ENCODE measurements at regions of chr16 and their contacts with region 1.

Region 1: GRCh38 chr16:71894921-71895678 is at the start of gene IST1:
- DNase-seq: peak; percentile 88 to 98 (median 98)
- ATAC-seq: peak; percentile 97
- H3K4me3 ChIP-seq: peak within 1 kb of the TSS; percentile 99
- H3K4me3 Mint-ChIP-seq: peak within 1 kb of the TSS; percentile 95 to 99 (median 96)
- H3K27ac ChIP-seq: peak within 1 kb of the TSS; percentile 98
- H3K27ac Mint-ChIP-seq: peak within 1 kb of the TSS; percentile 92 to 98 (median 97)
- H3K4me1 ChIP-seq: peaks cover 22 to 25% of the 10 kb centered on the region in 2 donors
- H3K4me1 Mint-ChIP-seq: peaks cover 23 to 43% (median 30%) of the 10 kb centered on the region in 7 donors
- H3K27me3 ChIP-seq: no peaks in the 10 kb centered on the region
- H3K27me3 Mint-ChIP-seq: no peaks in the 10 kb centered on the region
- total RNA-seq, gene IST1: 176 to 303 (median 286) TPM

Region 2: GRCh38 chr16:70454222-70455034 is 1440.7 kb before region 1 on chr16 and contains the start of gene FCSK:
- CTCF ChIA-PET with region 1: no interaction called
- POLR2A ChIA-PET with region 1: no interaction called
- intact Hi-C with region 1: no loop called
- DNase-seq: peak; percentile 63 to 88 (median 84)
- ATAC-seq: peak; percentile 94
- H3K4me3 ChIP-seq: peak within 1 kb of the TSS; percentile 82
- H3K4me3 Mint-ChIP-seq: peak within 1 kb of the TSS; percentile 90 to 95 (median 93)
- H3K27ac ChIP-seq: peak within 1 kb of the TSS; percentile 99
- H3K27ac Mint-ChIP-seq: peak within 1 kb of the TSS; percentile 81 to 95 (median 89)
- H3K4me1 ChIP-seq: peaks cover 8 to 12% of the 10 kb centered on the region in 2 donors
- H3K4me1 Mint-ChIP-seq: peaks cover 6 to 45% (median 37%) of the 10 kb centered on the region in 7 donors
- H3K27me3 ChIP-seq: no peaks in the 10 kb centered on the region
- H3K27me3 Mint-ChIP-seq: peaks cover 0 to 3% (median 0%) of the 10 kb centered on the region in 5 donors
- total RNA-seq, gene FCSK: 23.7 to 45.2 (median 36.7) TPM

Region 3: DNA sequence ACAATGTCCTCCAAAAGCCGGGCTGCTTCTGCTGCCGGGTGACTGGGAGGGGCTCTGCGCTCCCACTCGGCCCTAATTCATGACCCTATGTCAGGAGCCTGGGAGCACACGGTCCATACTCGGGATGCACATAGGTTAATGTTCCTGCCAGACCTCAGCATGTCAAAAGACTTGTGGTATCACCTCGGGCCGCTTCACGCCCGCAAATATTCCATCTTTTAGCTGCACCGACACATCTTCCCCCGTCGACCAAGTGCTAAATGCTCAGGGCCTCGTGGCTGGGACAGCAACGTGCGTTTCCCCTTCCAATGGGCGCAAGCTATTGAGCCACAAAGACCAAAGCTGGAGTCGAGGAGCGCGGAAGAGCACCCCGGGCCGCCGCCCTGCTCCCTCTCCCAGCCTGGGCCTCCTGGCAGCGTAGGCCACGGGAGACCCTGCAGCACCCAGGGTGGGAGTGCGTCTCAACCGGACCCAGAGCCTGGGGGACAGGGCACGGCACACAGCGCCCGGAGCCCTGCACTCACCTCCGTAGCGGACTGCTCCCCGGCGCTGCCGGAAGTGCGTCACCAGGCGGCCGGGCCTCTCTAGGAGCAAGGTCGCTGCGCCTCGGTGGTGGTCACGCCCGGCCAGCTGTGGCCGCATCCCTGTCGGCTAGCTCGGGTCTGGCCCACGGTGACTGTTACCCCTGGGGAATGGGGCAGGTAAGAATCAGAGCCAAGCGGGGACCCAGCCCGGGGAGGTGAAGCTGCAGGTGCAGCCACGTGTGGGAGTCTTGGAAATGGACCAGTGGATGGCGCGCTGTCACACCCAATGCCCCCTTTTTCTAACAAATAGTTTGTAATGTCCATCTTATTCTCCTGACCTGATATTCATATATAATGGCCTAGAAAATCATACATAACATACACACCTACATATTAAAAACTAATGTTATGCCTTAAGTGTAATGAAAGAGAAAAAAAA is 433.1 kb before region 1 on chr16 and contains the start of gene ZNF23:
- CTCF ChIA-PET with region 1: no interaction called
- POLR2A ChIA-PET with region 1: no interaction called
- intact Hi-C with region 1: loop called in 1 of 2 experiments (anchors 10 kb)
- DNase-seq: peak; percentile 53 to 84 (median 72)
- ATAC-seq: peak; percentile 99
- H3K4me3 ChIP-seq: peak within 1 kb of the TSS; percentile 92
- H3K4me3 Mint-ChIP-seq: peak within 1 kb of the TSS; percentile 88 to 97 (median 94)
- H3K27ac ChIP-seq: peak within 1 kb of the TSS; percentile 87
- H3K27ac Mint-ChIP-seq: peak within 1 kb of the TSS; percentile 85 to 98 (median 92)
- H3K4me1 ChIP-seq: peaks cover 4 to 6% of the 10 kb centered on the region in 2 donors
- H3K4me1 Mint-ChIP-seq: peaks cover 13 to 39% (median 27%) of the 10 kb centered on the region in 7 donors
- H3K27me3 ChIP-seq: no peaks in the 10 kb centered on the region
- H3K27me3 Mint-ChIP-seq: no peaks in the 10 kb centered on the region
- total RNA-seq, gene ZNF23: 6.5 to 16.0 (median 8.8) TPM

Region 4: DNA sequence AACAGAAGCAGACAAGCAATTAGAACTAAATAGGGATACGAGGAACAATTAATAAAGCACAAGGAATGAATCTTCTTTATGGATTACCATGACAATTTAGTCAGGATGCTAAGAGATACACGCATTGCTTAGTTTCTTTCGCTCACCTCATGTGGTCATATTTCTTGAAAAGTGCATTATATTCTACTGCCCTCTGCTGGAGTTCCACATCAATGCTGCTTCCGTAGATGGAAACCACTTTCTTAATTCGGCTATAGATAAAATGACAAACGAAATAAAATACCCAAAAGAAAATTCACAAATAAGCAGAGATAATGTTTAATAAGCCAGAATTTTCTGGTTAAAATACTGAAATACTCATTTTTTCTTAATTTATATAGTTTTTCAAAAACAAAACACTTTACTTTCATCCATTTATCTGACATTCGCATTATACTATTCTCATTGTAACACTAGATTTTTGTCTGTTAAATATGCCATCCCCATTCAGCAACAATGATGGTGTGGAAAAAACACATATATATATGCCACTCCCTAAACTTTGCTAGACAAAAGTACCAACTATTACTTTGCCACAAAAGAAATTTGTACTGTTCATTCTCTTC is 148.6 kb before region 1 on chr16:
- CTCF ChIA-PET with region 1: no interaction called
- POLR2A ChIA-PET with region 1: no interaction called
- intact Hi-C with region 1: loop called in 1 of 2 experiments (anchors 1 kb)
- DNase-seq: peak in 7 of 9 donors; percentile 14 to 59 (median 45)
- ATAC-seq: peak; percentile 82
- H3K4me3 ChIP-seq: no peak overlapping the region
- H3K4me3 Mint-ChIP-seq: no peak overlapping the region
- H3K27ac ChIP-seq: no peak overlapping the region
- H3K27ac Mint-ChIP-seq: peak overlapping the region in 1 of 9 donors; percentile 14
- H3K4me1 ChIP-seq: no peaks in the 10 kb centered on the region
- H3K4me1 Mint-ChIP-seq: peaks cover 0 to 5% (median 0%) of the 10 kb centered on the region in 7 donors
- H3K27me3 ChIP-seq: no peaks in the 10 kb centered on the region
- H3K27me3 Mint-ChIP-seq: no peaks in the 10 kb centered on the region

Region 5: DNA sequence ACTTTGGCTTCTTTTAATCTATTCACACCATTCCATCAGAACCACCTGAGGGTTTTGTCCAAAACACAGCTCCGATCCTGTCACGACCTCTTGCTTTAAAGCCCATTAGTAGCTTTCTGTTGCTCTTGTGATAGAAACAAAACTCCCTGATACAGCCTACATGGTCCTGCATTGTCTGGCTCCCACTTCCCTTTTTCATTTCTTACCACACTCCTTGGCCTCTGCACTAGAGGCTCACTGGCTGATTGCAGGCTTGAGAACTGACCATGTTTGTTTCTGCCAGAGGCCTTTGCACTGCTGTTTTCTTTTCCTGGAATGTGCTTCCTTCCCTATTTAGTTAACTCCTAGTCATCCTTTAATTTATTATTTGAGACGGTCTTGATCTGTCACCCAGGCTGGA is 23.9 kb after region 1 on chr16:
- CTCF ChIA-PET with region 1: no interaction called
- POLR2A ChIA-PET with region 1: interaction called, 4 read pairs
- intact Hi-C with region 1: loop called in 1 of 2 experiments (anchors 2 kb)
- DNase-seq: no peak
- ATAC-seq: peak; percentile 52
- H3K4me3 ChIP-seq: no peak overlapping the region
- H3K4me3 Mint-ChIP-seq: no peak overlapping the region
- H3K27ac ChIP-seq: no peak overlapping the region
- H3K27ac Mint-ChIP-seq: peak overlapping the region in 2 of 9 donors; percentile 63 to 70
- H3K4me1 ChIP-seq: peaks cover 6% of the 10 kb centered on the region in 2 donors
- H3K4me1 Mint-ChIP-seq: peaks cover 21 to 52% (median 39%) of the 10 kb centered on the region in 7 donors
- H3K27me3 ChIP-seq: no peaks in the 10 kb centered on the region
- H3K27me3 Mint-ChIP-seq: no peaks in the 10 kb centered on the region

Region 6: DNA sequence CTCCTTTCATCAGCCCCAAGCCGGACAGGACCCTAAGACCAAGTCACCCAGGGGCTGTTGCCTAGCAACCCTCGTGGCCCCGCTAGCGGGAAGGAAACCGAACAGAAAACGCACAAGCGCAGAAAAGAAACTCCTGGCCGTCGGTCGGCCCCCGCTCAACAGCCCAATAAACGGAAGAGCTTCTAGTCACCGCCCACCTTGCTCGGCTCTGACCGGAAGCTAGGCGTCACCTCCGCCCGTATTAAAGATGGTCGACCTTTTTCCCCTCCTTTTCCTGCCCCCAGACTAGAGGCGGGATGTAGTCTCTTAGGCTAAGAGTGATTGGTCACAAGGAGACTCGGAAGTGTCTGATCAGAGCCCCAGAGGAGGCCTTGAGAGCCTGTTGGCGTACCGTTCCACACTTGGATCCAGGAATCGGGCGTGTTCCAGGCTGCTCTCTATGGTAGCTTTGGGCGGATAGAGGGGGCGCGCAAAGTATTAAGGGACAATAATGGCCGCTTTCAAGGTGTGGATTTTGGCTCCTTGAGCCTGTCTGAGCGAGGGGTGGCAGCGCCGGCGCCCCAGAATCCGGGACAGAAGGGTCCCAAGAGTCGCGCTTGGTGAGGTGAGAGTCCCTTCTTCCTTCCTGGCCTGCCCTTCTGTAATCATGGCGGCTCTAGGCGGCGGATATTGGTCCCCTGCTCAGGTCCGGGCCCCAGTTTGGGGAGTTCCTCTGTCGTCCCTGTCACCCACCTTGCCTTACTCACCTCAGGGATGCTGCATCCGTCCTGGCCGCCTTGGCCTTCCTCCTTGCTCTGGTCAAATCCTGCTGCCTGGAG is 198.6 kb after region 1 on chr16 and contains the starts of genes DHX38 and TXNL4B:
- CTCF ChIA-PET with region 1: no interaction called
- POLR2A ChIA-PET with region 1: no interaction called
- intact Hi-C with region 1: loop called (anchors 1 to 2 kb)
- DNase-seq: peak; percentile 70 to 95 (median 92)
- ATAC-seq: peak; percentile 98
- H3K4me3 ChIP-seq: peak within 1 kb of the TSS; percentile 86
- H3K4me3 Mint-ChIP-seq: peak within 1 kb of the TSS; percentile 94 to 100 (median 98)
- H3K27ac ChIP-seq: peak within 1 kb of the TSS; percentile 93
- H3K27ac Mint-ChIP-seq: peak within 1 kb of the TSS; percentile 92 to 100 (median 99)
- H3K4me1 ChIP-seq: peaks cover 21 to 24% of the 10 kb centered on the region in 2 donors
- H3K4me1 Mint-ChIP-seq: peaks cover 33 to 70% (median 63%) of the 10 kb centered on the region in 7 donors
- H3K27me3 ChIP-seq: no peaks in the 10 kb centered on the region
- H3K27me3 Mint-ChIP-seq: no peaks in the 10 kb centered on the region
- total RNA-seq, gene DHX38: 90.1 to 113 (median 104) TPM
- total RNA-seq, gene TXNL4B: 12.5 to 20.9 (median 18.5) TPM